BJ (cell line): ENCODE measurements at regions of chr19 and their contacts with region 1.

Region 1: GRCh38 chr19:33241530-33242101 is 16.0 kb upstream of the SLC7A10 start:
- DNase-seq: no peak
- H3K4me3 ChIP-seq: no peak overlapping the region
- H3K27me3 ChIP-seq: peaks cover 7% of the 10 kb centered on the region; the same call in 1 of the 2 replicates
- CTCF ChIP-seq: peak; percentile 68

Region 2: GRCh38 chr19:33125929-33126388 is 115.7 kb before region 1 on chr19:
- CTCF ChIA-PET with region 1: no interaction called
- POLR2A ChIA-PET with region 1: no interaction called
- DNase-seq: no peak
- H3K4me3 ChIP-seq: no peak overlapping the region
- H3K27me3 ChIP-seq: no peaks in the 10 kb centered on the region
- CTCF ChIP-seq: peak; percentile 88

Region 3: DNA sequence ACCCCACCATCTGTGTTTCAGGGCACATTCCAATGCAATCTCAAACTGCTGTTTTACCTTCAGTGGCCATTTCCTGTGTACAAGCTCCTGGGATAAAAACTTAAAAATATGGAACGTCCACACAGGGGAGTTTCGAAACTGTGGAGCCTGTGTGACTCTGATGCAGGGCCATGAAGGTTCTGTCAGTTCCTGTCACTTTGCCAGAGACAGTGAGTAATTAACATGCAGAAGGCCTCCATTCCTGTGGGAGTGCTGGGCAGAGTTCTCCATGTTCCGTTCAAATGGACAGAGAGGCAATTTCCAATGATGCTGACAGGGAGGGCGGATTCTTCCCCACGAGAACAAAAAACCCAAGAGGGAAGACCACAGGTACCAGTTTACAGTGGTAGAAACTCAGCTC is 85.3 kb before region 1 on chr19:
- CTCF ChIA-PET with region 1: no interaction called
- POLR2A ChIA-PET with region 1: no interaction called
- DNase-seq: no peak
- H3K4me3 ChIP-seq: no peak overlapping the region
- H3K27me3 ChIP-seq: no peaks in the 10 kb centered on the region; the same call in 1 of the 2 replicates
- CTCF ChIP-seq: no peak

Region 4: DNA sequence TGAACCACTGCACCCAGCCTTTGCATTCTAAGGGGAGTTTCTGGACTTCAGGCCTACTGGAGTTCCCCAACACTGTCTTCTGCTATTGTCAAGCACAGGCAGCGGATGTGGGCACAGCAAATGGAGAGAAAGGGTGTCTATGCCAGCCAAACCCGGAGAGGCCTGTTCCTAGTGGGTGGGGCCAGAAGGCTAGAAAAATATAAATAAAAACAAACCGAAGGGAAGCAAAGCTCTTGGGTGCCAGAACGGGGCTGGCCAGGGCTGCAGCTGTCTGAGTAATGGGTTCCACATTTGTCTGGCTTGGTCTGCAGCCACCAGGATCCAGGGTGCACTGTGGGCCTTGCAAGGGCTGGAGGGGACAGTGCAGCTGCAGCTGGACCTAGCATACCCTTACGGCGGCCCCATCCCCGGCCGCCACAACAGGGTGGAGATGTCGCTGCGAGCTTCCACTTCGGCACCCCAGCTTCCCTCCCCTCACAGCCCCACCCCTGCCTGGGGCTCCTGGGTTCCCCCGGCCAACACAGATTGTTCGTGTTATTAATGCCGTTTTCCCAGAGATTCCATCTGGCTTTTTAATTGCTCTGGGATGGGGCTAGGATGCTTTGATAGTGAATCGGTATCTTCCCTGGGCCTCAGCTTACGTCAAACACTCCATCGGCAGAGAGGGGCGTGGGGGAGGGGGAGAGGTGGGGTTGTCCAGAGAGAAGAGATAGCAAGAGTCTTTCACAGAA is 54.8 kb after region 1 on chr19:
- CTCF ChIA-PET with region 1: interaction called, 14 read pairs
- POLR2A ChIA-PET with region 1: no interaction called
- DNase-seq: peak; percentile 64
- H3K4me3 ChIP-seq: no peak overlapping the region
- H3K27me3 ChIP-seq: peaks cover 17% of the 10 kb centered on the region
- CTCF ChIP-seq: no peak

Region 5: GRCh38 chr19:33302175-33302973 is 60.8 kb after region 1 on chr19 and contains the start of gene CEBPA:
- CTCF ChIA-PET with region 1: interaction called, 14 read pairs
- POLR2A ChIA-PET with region 1: no interaction called
- DNase-seq: no peak
- H3K4me3 ChIP-seq: peak within 1 kb of the TSS; percentile 62
- H3K27me3 ChIP-seq: peaks cover 27% of the 10 kb centered on the region
- CTCF ChIP-seq: peak; percentile 34; the same call in 1 of the 2 replicates
- polyA plus RNA-seq, gene CEBPA: 0.28 and 0.50 TPM in 2 replicates